Dendritic cell treated with granulocyte-macrophage colony-stimulating factor and Interleukin-4, amounts not matched to agents 40 ng/mL and 50 ng/mL, for 4 days (primary cell): ENCODE measurements at regions of chr17 and their contacts with region 1.

Region 1: GRCh38 chr17:979538-980405 is at the start of gene NXN:
- H3K4me3 Mint-ChIP-seq: peak within 1 kb of the TSS; percentile 82
- H3K27ac Mint-ChIP-seq: peak within 1 kb of the TSS; percentile 79
- H3K4me1 Mint-ChIP-seq: peaks cover 32% of the 10 kb centered on the region
- H3K27me3 Mint-ChIP-seq: peaks cover 44% of the 10 kb centered on the region

Region 2: GRCh38 chr17:794876-795275 is 184.9 kb before region 1 on chr17:
- intact Hi-C with region 1: loop called (anchors 1 kb)
- H3K4me3 Mint-ChIP-seq: peak overlapping the region; percentile 53
- H3K27ac Mint-ChIP-seq: no peak overlapping the region
- H3K4me1 Mint-ChIP-seq: peaks cover 9% of the 10 kb centered on the region
- H3K27me3 Mint-ChIP-seq: peaks cover 2% of the 10 kb centered on the region

Region 3: GRCh38 chr17:879549-880442 is 100.0 kb before region 1 on chr17:
- intact Hi-C with region 1: loop called (anchors 5 kb)
- H3K4me3 Mint-ChIP-seq: no peak overlapping the region
- H3K27ac Mint-ChIP-seq: no peak overlapping the region
- H3K4me1 Mint-ChIP-seq: peaks cover 6% of the 10 kb centered on the region
- H3K27me3 Mint-ChIP-seq: peaks cover 44% of the 10 kb centered on the region

Region 4: GRCh38 chr17:1058423-1059130 is 78.8 kb after region 1 on chr17:
- intact Hi-C with region 1: no loop called
- H3K4me3 Mint-ChIP-seq: no peak overlapping the region
- H3K27ac Mint-ChIP-seq: no peak overlapping the region
- H3K4me1 Mint-ChIP-seq: peaks cover 33% of the 10 kb centered on the region
- H3K27me3 Mint-ChIP-seq: no peaks in the 10 kb centered on the region

Region 5: GRCh38 chr17:1294157-1294717 is 314.5 kb after region 1 on chr17:
- intact Hi-C with region 1: no loop called
- H3K4me3 Mint-ChIP-seq: no peak overlapping the region
- H3K27ac Mint-ChIP-seq: no peak overlapping the region
- H3K4me1 Mint-ChIP-seq: no peaks in the 10 kb centered on the region
- H3K27me3 Mint-ChIP-seq: peaks cover 70% of the 10 kb centered on the region